ENCODE measurements at regions of chr12 and their contacts with region 1.

Region 1: GRCh38 chr12:110619534-110619953 is 5.6 kb downstream of the TCTN1 start:
- DNase-seq: no peak
- H3K4me3 ChIP-seq: no peak overlapping the region
- H3K27ac ChIP-seq: no peak overlapping the region
- H3K4me1 ChIP-seq: peaks cover 10% of the 10 kb centered on the region
- H3K27me3 ChIP-seq: no peaks in the 10 kb centered on the region
- CTCF ChIP-seq: no peak

Region 2: GRCh38 chr12:110566993-110567392 is 52.6 kb before region 1 on chr12:
- CTCF ChIA-PET with region 1: no interaction called
- POLR2A ChIA-PET with region 1: no interaction called
- intact Hi-C with region 1: no loop called
- DNase-seq: no peak
- H3K4me3 ChIP-seq: no peak overlapping the region
- H3K27ac ChIP-seq: peak overlapping the region; percentile 50
- H3K4me1 ChIP-seq: peaks cover 35% of the 10 kb centered on the region
- H3K27me3 ChIP-seq: no peaks in the 10 kb centered on the region
- CTCF ChIP-seq: no peak

Region 3: DNA sequence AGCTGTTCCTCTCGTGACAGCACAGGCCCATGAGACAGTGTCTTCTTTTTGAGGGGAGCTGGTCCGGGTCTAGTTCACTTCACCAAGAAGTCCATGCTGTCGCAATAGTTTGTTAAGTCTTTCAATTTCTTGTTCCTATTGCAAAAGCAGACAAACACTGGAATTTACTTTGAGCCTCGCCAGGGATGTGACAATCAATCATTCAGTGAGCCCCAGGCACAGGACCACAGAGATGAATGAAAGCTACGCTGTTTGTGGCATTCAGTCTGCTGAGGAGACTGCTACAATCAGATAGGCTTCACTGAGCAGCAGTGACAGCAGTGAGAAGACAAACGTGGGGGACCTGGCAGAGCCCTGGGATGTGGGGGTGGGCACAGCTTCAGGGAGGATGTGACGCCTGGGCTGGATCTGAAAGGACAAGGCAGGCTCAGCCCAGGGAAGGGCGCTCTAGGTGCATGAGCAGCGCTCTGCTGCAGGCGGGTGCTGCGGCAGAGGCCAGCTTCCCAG is 29.9 kb after region 1 on chr12:
- CTCF ChIA-PET with region 1: interaction called, 10 read pairs
- POLR2A ChIA-PET with region 1: no interaction called
- intact Hi-C with region 1: no loop called
- DNase-seq: no peak
- H3K4me3 ChIP-seq: no peak overlapping the region
- H3K27ac ChIP-seq: no peak overlapping the region
- H3K4me1 ChIP-seq: no peaks in the 10 kb centered on the region
- H3K27me3 ChIP-seq: no peaks in the 10 kb centered on the region
- CTCF ChIP-seq: no peak

Measured in PC-9 (cell line).